ENCODE measurements at regions of chr18 and their contacts with region 1.

Region 1: DNA sequence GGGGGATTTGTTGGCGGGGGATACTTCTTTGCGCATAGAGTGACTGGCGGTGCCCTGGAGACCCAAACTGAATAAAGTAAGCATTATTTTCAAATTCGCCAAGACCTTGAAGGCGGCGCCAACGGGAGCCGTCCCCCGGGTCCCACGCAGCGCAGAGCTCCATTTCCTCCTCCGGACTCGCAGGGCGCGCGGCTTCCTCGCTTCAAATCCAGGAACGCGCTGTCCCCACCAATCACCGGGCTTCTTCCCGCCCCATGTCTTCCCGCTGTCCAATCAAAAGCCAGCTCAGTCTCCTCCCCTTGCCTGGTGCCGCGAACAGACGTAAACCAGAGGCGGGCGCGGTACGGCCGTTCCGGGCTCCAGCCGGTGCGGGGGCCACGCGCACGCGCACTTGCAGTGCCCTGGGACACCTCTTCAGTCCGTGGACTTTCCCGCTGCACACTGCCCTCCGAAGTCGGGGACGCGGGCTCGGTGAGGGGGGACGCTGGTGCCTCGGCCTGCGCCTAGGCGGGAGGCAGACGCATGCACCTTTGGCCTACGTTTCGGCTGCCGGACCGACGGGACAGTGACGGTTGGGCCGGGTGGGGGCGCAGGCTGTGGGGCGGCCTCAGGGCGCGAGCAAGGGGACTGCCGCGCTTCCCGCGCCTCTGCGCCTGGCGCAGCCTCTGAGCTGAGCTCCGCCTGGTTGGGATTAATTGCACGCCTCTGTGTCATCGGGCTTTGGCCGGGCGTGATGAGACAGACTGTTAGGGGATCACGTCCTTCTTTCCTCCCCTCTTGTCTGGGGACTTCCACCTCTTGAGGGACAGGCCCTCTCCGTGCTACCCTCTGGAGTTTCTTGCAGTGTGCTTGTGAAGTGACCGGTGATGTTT is at the start of gene CEP192:
- H3K4me3 ChIP-seq: peak within 1 kb of the TSS; percentile 83
- H3K27ac ChIP-seq: peak within 1 kb of the TSS; percentile 91
- H3K4me1 ChIP-seq: peaks cover 13% of the 10 kb centered on the region; the same call in 1 of the 2 replicates
- CTCF ChIP-seq: peak; percentile 96

Region 2: GRCh38 chr18:12376718-12377555 is 614.3 kb before region 1 on chr18 and contains the start of gene AFG3L2:
- CTCF ChIA-PET with region 1: no interaction called
- POLR2A ChIA-PET with region 1: interaction called, 16 read pairs
- H3K4me3 ChIP-seq: peak within 1 kb of the TSS; percentile 68
- H3K27ac ChIP-seq: peak within 1 kb of the TSS; percentile 99
- H3K4me1 ChIP-seq: peaks cover 16% of the 10 kb centered on the region
- CTCF ChIP-seq: no peak

Region 3: DNA sequence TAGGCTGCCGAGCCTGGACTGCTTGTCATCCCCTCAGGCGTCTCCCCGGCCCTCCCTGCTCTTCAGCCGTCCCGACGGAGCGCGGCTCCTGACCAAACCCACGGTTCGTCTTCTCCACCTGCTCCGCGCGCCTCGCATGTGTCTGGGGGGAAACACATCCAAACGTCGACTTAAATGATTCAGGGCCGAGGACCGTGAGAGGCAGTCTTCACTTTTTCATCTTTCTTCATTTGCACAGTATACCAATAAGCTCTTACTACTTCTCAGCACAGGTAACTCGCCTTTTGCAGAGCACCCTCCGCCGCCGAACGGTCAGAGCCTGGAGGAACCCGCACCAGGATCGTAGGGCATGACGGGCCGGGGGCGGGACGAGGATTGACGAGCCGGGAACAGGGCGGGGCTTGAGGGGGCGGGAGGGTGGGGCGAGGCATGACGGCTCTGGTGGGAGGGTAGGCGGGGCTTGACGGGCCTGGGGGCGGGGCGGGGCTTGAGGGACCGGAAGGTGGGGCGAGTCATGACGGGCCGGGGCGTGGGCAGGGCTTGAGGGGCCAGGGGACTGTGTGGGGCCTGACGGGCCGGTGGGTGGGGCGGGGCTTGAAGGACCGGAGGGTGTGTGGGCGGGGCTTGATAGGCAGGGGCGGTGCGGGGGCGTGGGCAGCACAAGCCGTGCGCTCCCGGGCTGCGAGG is 43.7 kb before region 1 on chr18 and contains the start of gene SEH1L:
- CTCF ChIA-PET with region 1: no interaction called
- POLR2A ChIA-PET with region 1: interaction called, 66 read pairs
- H3K4me3 ChIP-seq: peak within 1 kb of the TSS; percentile 73
- H3K27ac ChIP-seq: peak within 1 kb of the TSS; percentile 90
- H3K4me1 ChIP-seq: peaks cover 5% of the 10 kb centered on the region
- CTCF ChIP-seq: no peak

Region 4: GRCh38 chr18:12960853-12961397 is 30.3 kb before region 1 on chr18:
- CTCF ChIA-PET with region 1: no interaction called
- POLR2A ChIA-PET with region 1: interaction called, 12 read pairs
- H3K4me3 ChIP-seq: no peak overlapping the region
- H3K27ac ChIP-seq: peak overlapping the region; percentile 17; the same call in 1 of the 2 replicates
- H3K4me1 ChIP-seq: peaks cover 16% of the 10 kb centered on the region
- CTCF ChIP-seq: no peak

Region 5: GRCh38 chr18:12975488-12975887 is 15.7 kb before region 1 on chr18:
- CTCF ChIA-PET with region 1: interaction called, 4 read pairs
- POLR2A ChIA-PET with region 1: interaction called, 17 read pairs
- H3K4me3 ChIP-seq: no peak overlapping the region
- H3K27ac ChIP-seq: no peak overlapping the region
- H3K4me1 ChIP-seq: no peaks in the 10 kb centered on the region
- CTCF ChIP-seq: no peak

Region 6: DNA sequence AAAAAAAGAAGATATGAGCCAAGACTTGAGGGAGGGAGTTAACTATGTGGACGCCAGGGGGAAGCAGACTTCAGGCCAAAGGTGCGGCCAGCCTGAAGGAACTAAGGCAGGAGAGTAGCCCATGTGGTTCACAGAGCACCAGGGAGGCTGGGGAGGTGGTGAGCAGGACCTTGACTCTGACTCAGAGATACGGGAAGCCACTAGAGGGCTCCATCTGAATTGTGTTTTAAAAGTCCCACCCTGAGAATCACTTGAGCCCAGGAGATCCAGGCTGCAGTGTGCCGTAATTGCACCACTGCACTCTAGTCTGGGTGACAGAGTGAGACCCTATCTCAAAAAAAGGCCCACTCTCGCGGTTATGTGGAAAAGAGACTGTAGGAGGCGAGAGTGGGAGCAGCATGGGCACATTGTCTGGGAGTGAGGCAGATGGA is 12.3 kb after region 1 on chr18:
- CTCF ChIA-PET with region 1: interaction called, 4 read pairs
- POLR2A ChIA-PET with region 1: interaction called, 28 read pairs
- H3K4me3 ChIP-seq: no peak overlapping the region
- H3K27ac ChIP-seq: no peak overlapping the region
- H3K4me1 ChIP-seq: no peaks in the 10 kb centered on the region
- CTCF ChIP-seq: peak; percentile 79

Region 7: DNA sequence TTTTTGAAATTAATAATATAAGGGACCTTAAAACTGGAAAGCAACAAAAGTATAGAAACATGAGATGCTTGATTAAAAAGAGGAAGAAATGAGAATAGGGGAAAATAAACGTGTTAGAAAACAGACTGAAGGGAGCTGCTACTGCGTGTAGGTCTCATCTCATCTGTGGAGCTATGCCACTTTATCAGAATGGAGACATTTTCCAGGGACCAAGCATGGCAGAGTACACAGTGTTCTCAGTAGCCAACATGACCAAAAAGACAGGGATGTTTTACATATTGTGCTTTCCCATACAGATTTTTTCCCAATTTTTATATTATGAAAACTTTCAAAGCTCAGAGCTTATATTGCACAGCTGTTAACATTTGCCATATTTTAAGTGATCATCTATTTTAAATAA is 23.0 kb after region 1 on chr18:
- CTCF ChIA-PET with region 1: interaction called, 5 read pairs
- POLR2A ChIA-PET with region 1: interaction called, 10 read pairs
- H3K4me3 ChIP-seq: no peak overlapping the region
- H3K27ac ChIP-seq: no peak overlapping the region
- H3K4me1 ChIP-seq: no peaks in the 10 kb centered on the region
- CTCF ChIP-seq: no peak

Region 8: GRCh38 chr18:13513021-13513420 is 521.8 kb after region 1 on chr18:
- CTCF ChIA-PET with region 1: no interaction called
- POLR2A ChIA-PET with region 1: no interaction called
- H3K4me3 ChIP-seq: no peak overlapping the region
- H3K27ac ChIP-seq: no peak overlapping the region
- H3K4me1 ChIP-seq: peaks cover 3% of the 10 kb centered on the region
- CTCF ChIP-seq: no peak